OCI-LY7 (cell line): ENCODE measurements at regions of chr6 and their contacts with region 1.

Region 1: DNA sequence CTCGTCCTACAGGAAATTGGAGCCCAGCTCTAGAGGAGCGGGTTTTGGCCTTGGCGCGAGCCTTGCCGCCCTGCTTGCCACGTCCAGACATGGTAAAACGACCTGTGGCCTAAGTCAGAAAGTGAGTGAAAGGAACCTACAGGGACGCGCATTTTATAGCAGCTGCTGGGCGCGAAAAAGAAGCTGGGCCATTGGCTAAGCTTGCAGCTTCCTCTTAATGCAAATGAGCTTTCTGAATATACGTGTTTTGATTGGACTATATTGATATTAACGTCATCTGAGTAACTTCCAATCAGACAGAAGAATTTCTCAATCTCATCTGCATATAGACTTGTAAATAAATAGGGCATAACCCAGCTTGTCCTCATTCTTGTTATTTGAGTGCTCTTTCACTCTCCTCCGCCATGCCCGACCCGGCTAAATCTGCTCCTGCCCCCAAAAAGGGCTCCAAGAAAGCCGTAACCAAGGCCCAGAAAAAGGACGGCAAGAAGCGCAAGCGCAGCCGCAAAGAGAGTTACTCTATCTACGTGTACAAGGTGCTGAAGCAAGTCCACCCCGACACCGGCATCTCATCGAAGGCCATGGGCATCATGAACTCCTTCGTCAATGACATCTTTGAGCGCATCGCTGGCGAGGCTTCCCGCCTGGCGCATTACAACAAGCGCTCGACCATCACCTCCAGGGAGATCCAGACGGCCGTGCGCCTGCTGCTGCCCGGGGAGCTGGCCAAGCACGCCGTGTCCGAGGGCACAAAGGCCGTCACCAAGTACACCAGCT is 18.9 kb downstream of the OR2B2 start:
- DNase-seq: peak; percentile 96
- H3K4me3 ChIP-seq: peak overlapping the region; percentile 94
- H3K27ac ChIP-seq: peak overlapping the region; percentile 100
- H3K4me1 ChIP-seq: peaks cover 36% of the 10 kb centered on the region
- CTCF ChIP-seq: no peak

Region 2: DNA sequence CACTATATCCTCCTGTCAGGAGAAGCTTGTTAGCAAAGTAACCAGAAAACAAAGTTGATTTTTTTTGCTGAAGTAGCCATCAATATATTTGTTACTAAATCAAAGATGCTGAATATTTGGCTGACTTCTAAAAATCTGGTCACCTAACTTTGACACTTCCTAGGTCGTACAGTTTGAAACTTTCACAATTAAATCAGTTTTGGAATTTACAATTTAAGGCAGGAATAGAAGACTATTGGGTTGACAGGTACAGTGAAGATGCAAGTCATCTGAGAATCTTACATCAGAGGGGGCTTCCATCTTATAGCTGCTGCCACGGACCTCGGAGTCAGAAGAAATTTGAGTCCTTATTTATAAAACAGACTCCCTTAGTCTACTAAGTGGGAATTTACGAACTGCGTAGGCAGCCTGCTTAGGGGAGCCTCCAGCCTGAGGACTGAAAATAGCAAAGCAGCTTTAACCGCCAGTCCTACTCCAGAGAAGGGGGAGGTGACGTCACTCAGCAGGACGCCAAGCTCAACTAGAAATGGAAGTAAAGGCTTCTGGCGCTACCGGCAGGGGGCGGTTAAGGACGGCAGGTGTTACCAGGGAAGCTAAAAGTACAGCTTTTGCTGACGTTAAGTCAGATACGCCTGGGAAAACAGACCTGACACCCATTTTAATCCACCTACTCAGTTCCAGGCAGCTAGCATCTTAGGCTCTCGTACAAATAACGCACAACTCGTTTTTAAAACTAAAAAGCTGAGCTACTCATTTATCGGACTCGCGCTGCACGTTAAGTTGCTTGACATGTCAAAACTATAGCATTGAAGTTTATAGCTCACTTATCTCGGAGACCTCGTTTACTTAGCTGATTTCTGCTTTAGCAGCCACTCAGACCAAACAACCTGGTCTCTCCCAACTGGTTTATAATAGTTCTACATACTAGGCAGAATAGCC is 1867.1 kb before region 1 on chr6:
- CTCF ChIA-PET with region 1: no interaction called
- POLR2A ChIA-PET with region 1: interaction called, 49 read pairs
- intact Hi-C with region 1: loop called (anchors 5 kb)
- DNase-seq: peak; percentile 95
- H3K4me3 ChIP-seq: peak overlapping the region; percentile 71
- H3K27ac ChIP-seq: peak overlapping the region; percentile 99
- H3K4me1 ChIP-seq: peaks cover 80% of the 10 kb centered on the region
- CTCF ChIP-seq: peak; percentile 88

Region 3: GRCh38 chr6:26122793-26123674 is 1770.2 kb before region 1 on chr6:
- CTCF ChIA-PET with region 1: no interaction called
- POLR2A ChIA-PET with region 1: interaction called, 4 read pairs
- intact Hi-C with region 1: loop called (anchors 5 kb)
- DNase-seq: peak; percentile 99
- H3K4me3 ChIP-seq: peak overlapping the region; percentile 72
- H3K27ac ChIP-seq: peak overlapping the region; percentile 99
- H3K4me1 ChIP-seq: peaks cover 60% of the 10 kb centered on the region
- CTCF ChIP-seq: no peak

Region 4: GRCh38 chr6:27132532-27133280 is 760.5 kb before region 1 on chr6:
- CTCF ChIA-PET with region 1: no interaction called
- POLR2A ChIA-PET with region 1: interaction called, 26 read pairs
- intact Hi-C with region 1: loop called (anchors 2 kb)
- DNase-seq: peak; percentile 98
- H3K4me3 ChIP-seq: peak overlapping the region; percentile 79
- H3K27ac ChIP-seq: peak overlapping the region; percentile 99
- H3K4me1 ChIP-seq: peaks cover 74% of the 10 kb centered on the region
- CTCF ChIP-seq: no peak

Region 5: DNA sequence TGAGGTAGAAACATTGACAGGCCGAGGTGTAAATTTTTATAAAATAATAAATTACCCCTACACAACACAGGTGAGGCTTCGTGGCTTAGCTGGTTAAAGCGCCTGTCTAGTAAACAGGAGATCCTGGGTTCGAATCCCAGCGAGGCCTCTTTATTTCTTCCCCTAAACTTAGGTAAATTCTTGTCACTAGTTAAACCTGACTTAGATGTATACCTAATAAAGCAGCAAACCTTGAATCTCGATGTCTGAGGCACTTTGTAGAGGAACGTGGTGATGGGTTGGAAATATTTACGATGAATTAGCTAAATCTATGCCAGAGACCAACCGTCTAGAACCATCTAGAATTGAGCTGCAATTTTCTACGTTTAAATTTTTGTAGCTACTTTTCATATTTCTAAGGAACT is 166.6 kb before region 1 on chr6:
- CTCF ChIA-PET with region 1: no interaction called
- POLR2A ChIA-PET with region 1: no interaction called
- intact Hi-C with region 1: no loop called
- DNase-seq: no peak
- H3K4me3 ChIP-seq: no peak overlapping the region
- H3K27ac ChIP-seq: no peak overlapping the region
- H3K4me1 ChIP-seq: no peaks in the 10 kb centered on the region
- CTCF ChIP-seq: no peak

Region 6: DNA sequence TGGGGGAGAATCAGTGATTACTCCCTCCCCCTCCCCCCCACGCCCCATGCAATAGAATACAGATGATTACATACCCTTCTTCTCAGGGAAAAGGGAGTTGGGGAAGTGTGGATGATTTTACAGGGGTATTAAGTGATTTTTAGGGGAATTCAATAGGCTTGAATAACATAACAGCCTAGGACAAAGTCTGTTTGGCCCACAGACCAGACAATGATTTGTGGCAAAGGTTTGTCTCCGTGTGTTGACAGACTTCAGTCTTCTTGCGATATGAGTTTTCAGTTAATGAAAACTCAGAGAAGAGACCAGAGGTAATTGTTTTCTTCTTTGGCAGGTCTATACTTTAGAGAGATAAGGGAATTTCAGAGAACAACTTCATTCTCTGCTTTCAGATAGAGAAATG is 76.3 kb before region 1 on chr6:
- CTCF ChIA-PET with region 1: interaction called, 3 read pairs
- POLR2A ChIA-PET with region 1: interaction called, 286 read pairs
- intact Hi-C with region 1: loop called (anchors 2 kb)
- DNase-seq: no peak
- H3K4me3 ChIP-seq: no peak overlapping the region
- H3K27ac ChIP-seq: peak overlapping the region; percentile 96
- H3K4me1 ChIP-seq: peaks cover 79% of the 10 kb centered on the region
- CTCF ChIP-seq: no peak

Region 7: DNA sequence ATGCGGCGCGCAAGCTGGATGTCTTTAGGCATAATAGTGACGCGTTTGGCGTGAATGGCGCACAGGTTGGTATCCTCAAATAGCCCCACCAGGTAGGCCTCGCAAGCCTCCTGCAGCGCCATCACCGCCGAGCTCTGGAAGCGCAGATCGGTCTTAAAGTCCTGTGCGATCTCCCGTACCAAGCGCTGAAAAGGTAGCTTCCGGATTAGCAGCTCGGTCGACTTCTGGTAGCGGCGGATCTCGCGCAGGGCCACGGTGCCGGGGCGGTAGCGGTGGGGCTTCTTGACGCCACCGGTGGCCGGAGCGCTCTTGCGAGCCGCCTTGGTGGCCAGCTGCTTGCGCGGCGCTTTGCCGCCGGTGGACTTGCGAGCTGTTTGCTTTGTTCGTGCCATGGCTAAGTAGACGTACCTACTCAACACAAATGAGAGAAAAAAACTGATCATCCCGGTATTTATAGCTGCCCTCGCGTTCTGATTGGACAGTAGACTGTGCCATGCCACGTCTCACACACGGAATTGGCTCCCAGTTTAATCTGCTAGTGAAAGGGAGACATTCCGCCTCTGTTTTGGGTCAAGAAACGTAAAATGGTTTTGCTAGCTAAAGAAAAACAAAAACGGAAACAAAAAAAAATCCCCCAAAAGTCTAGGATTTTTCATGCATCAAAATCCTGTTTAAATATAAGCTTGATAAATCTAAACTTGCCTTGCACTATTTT is 21.2 kb before region 1 on chr6:
- CTCF ChIA-PET with region 1: interaction called, 3 read pairs
- POLR2A ChIA-PET with region 1: interaction called, 407 read pairs
- intact Hi-C with region 1: loop called (anchors 1 kb)
- DNase-seq: peak; percentile 95
- H3K4me3 ChIP-seq: peak overlapping the region; percentile 69
- H3K27ac ChIP-seq: peak overlapping the region; percentile 99
- H3K4me1 ChIP-seq: peaks cover 71% of the 10 kb centered on the region
- CTCF ChIP-seq: peak; percentile 44

Region 8: GRCh38 chr6:27911956-27912446 is 18.8 kb after region 1 on chr6 and contains the start of gene OR2B2:
- CTCF ChIA-PET with region 1: no interaction called
- POLR2A ChIA-PET with region 1: no interaction called
- intact Hi-C with region 1: no loop called
- DNase-seq: no peak
- H3K4me3 ChIP-seq: no peak within 1 kb of the TSS
- H3K27ac ChIP-seq: no peak within 1 kb of the TSS
- H3K4me1 ChIP-seq: no peaks in the 10 kb centered on the region
- CTCF ChIP-seq: no peak
- total RNA-seq, gene OR2B2: not detected in 2 replicates

Region 9: GRCh38 chr6:28880894-28881780 is 987.9 kb after region 1 on chr6:
- CTCF ChIA-PET with region 1: no interaction called
- POLR2A ChIA-PET with region 1: interaction called, 6 read pairs
- intact Hi-C with region 1: loop called (anchors 5 kb)
- DNase-seq: peak; percentile 72
- H3K4me3 ChIP-seq: peak overlapping the region; percentile 50
- H3K27ac ChIP-seq: peak overlapping the region; percentile 61
- H3K4me1 ChIP-seq: peaks cover 64% of the 10 kb centered on the region
- CTCF ChIP-seq: no peak